GM13977 (cell line): ENCODE measurements at regions of chr17 and their contacts with region 1.

Region 1: DNA sequence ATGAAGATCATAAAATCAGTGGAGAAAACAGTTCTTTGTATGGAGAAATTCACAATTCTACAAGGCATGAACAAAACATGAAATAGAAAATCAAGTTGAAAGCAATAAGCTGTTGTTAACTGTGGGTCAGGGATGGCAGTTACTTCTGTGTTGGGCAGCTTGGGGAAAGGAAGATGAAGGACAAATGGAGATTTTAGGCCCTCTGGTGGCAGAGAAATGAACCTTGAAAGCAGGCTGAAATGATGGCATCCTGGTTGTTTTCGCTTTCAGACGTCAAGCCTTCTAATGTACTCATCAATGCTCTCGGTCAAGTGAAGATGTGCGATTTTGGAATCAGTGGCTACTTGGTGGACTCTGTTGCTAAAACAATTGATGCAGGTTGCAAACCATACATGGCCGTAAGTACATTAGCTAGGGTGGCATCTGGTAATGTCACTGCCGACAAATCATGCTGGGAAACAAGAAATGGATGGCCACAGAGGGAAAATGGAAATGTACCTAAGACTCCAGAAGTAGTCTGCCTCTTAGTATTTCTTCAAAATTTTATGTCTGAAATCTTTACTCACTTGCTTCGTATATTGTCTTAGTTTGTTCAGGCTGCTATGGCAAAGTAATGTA is 108.9 kb downstream of the MAP2K6 start:
- DNase-seq: peak; percentile 38
- CTCF ChIP-seq: peak; percentile 60

Region 2: GRCh38 chr17:68777243-68777855 is 746.0 kb before region 1 on chr17:
- in situ Hi-C with region 1: loop called (anchors 25 kb)
- DNase-seq: peak; percentile 32
- CTCF ChIP-seq: peak; percentile 71

Region 3: DNA sequence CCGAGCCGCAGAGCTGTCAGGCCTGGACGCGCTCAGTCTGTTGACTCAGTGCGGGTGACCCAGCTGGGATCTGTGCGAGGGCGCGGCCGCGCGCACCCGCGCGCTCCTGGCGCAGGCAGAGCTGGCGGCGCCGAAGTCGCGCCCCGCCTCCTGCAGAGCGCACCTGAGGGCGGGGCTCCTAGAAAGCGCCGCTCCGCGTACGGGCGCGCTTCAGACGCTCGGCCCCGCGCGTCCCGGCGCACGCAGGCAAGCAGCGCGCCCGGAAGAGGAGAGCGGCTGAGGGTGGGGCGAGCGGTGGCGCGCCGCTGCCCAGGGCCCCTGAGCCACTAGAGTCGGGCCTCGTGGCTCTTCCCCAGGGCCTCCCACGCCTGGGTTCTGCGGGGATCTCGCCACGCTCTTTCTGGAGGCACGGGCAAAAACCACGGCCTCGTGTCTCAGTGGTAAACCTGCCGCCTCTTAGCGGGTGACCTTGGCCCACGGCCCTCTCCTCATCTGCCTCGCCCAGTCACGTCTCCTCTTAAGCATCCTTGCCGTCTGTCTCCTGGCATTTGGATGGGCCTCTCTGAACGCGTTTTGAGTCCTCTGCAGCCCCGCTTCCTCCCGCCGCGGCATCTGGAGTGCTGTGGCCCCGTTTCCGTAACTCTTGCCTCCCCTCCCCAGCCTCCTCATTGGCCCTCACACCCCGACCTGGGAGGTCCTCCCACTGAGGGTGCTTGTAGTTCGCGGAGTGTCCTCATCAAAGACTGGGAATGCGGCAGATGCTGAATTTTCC is 196.1 kb before region 1 on chr17 and contains the start of gene ABCA5:
- in situ Hi-C with region 1: loop called (anchors 25 kb)
- DNase-seq: peak; percentile 96
- CTCF ChIP-seq: no peak

Region 4: GRCh38 chr17:70184770-70185169 is 661.4 kb after region 1 on chr17:
- in situ Hi-C with region 1: no loop called
- DNase-seq: no peak
- CTCF ChIP-seq: no peak